Aorta (tissue), 5 donors: ENCODE measurements at regions of chr14 and their contacts with region 1.

Region 1: GRCh38 chr14:63795532-63795931 is 57.3 kb upstream of the SYNE2 start:
- DNase-seq: no peak
- ATAC-seq: no peak
- H3K4me3 ChIP-seq: no peak overlapping the region
- H3K27ac ChIP-seq: no peak overlapping the region
- H3K4me1 ChIP-seq: no peaks in the 10 kb centered on the region
- H3K27me3 ChIP-seq: no peaks in the 10 kb centered on the region

Region 2: DNA sequence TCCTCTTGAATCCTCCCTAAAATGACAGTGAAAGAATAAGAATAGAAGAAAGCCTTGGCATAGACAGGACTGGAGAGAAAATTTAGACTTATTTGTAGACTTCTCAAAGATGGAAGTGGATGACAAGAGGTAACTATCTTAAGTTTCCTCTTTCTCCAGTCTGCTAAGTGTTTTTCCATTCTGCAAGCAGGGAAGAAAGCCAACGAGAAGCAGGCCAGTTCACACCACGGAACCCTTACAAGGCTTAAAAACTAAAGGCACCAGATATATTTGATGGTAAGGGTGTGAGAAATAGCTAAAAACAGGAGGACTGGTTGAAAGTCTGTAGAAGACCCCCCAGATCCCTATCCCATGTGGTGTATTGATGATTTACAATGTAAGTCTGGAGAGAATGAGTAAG is 393.9 kb before region 1 on chr14:
- intact Hi-C with region 1: no loop called
- DNase-seq: no peak
- ATAC-seq: no peak
- H3K4me3 ChIP-seq: no peak overlapping the region
- H3K27ac ChIP-seq: no peak overlapping the region
- H3K4me1 ChIP-seq: peaks cover 0 to 4% of the 10 kb centered on the region in 2 donors
- H3K27me3 ChIP-seq: no peaks in the 10 kb centered on the region

Region 3: DNA sequence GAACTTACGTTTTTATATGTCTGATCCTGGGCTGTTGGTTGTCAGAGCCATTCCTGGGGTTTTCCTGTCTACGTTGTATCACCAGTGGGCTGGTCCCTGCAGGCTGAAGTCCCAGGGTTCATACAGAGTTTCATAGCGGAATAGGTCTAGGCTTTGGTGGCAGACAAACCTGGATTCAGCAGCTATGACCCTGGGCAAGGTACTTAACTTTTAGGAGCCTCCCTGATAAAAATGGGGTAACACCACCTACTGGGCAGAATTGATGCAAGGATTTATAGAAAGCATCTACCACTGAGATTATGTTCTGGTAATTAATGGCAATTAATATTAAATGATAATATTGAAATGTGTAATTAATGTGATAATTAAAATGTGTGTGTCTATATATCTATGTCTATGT is 198.5 kb after region 1 on chr14:
- intact Hi-C with region 1: loop called in 1 of 2 experiments (anchors 10 kb)
- DNase-seq: no peak
- ATAC-seq: no peak
- H3K4me3 ChIP-seq: no peak overlapping the region
- H3K27ac ChIP-seq: no peak overlapping the region
- H3K4me1 ChIP-seq: no peaks in the 10 kb centered on the region
- H3K27me3 ChIP-seq: no peaks in the 10 kb centered on the region

Region 4: GRCh38 chr14:64005822-64006221 is 210.3 kb after region 1 on chr14:
- intact Hi-C with region 1: loop called in 1 of 2 experiments (anchors 10 kb)
- DNase-seq: no peak
- ATAC-seq: no peak
- H3K4me3 ChIP-seq: no peak overlapping the region
- H3K27ac ChIP-seq: no peak overlapping the region
- H3K4me1 ChIP-seq: peaks cover 0 to 3% of the 10 kb centered on the region in 2 donors
- H3K27me3 ChIP-seq: no peaks in the 10 kb centered on the region

Region 5: DNA sequence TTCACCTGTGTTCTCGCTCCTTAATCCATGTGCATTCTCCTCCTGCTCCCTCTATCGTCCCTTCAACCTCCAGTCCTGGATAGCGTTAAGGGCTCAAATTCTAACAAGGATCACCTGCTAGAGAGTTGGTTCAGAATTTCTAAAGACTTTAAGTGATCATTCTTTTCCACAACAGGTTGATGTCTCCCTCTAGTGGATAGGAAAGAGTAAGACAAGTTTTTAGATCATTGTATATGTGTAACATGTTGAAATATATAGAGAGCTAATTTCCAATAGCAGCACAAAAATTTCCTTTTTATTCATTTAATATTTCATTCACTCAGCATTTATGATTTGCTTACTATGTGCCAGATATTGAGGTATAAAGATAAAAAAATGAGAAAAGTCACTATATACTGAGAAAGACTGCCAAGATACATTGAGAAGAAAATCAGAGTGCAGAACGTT is 508.0 kb after region 1 on chr14:
- intact Hi-C with region 1: loop called (anchors 5 kb)
- DNase-seq: no peak
- ATAC-seq: peak; percentile 65
- H3K4me3 ChIP-seq: no peak overlapping the region
- H3K27ac ChIP-seq: no peak overlapping the region
- H3K4me1 ChIP-seq: peaks cover 0 to 2% of the 10 kb centered on the region in 2 donors
- H3K27me3 ChIP-seq: no peaks in the 10 kb centered on the region